ENCODE measurements at regions of chr9 and their contacts with region 1.

Region 1: DNA sequence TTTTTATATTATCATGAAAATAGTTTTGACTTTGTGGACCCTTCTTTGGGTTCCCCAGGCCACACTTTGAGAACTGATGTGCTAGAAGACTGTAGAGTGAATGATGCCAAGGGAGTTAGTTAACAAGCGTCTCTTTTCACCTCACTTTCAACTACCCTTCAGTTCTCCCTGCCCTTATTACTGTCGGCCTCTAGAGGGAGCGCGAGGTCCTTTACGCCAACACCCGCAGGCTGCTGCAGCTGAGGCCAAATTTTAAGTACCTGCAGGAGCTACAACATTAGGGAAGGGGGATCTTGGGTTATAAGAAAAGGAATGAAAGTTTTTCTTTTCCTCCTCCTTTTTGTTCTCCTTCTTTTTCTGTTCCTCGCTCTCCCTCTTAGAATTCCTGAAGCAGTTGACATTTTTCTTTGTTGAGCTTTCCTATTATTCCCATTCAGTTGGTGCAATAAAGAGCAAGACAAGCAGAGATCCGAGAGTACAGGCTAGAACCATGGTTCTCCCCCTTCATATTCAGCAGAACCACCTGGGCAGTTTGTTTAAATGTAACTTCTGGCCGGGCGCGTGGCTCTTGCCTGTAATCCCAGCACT is 84.0 kb downstream of the ZFAND5 start:
- DNase-seq: peak; percentile 81
- ATAC-seq: peak; percentile 77
- H3K4me3 Mint-ChIP-seq: no peak overlapping the region
- H3K27ac Mint-ChIP-seq: no peak overlapping the region
- H3K4me1 Mint-ChIP-seq: no peaks in the 10 kb centered on the region
- H3K27me3 Mint-ChIP-seq: no peaks in the 10 kb centered on the region
- CTCF ChIP-seq: peak; percentile 91

Region 2: GRCh38 chr9:72038890-72039410 is 242.1 kb before region 1 on chr9:
- CTCF ChIA-PET with region 1: interaction called, 35 read pairs
- POLR2A ChIA-PET with region 1: no interaction called
- intact Hi-C with region 1: no loop called
- DNase-seq: peak; percentile 75
- ATAC-seq: peak; percentile 92
- H3K4me3 Mint-ChIP-seq: no peak overlapping the region
- H3K27ac Mint-ChIP-seq: no peak overlapping the region
- H3K4me1 Mint-ChIP-seq: no peaks in the 10 kb centered on the region
- H3K27me3 Mint-ChIP-seq: peaks cover 5% of the 10 kb centered on the region
- CTCF ChIP-seq: peak; percentile 91

Region 3: DNA sequence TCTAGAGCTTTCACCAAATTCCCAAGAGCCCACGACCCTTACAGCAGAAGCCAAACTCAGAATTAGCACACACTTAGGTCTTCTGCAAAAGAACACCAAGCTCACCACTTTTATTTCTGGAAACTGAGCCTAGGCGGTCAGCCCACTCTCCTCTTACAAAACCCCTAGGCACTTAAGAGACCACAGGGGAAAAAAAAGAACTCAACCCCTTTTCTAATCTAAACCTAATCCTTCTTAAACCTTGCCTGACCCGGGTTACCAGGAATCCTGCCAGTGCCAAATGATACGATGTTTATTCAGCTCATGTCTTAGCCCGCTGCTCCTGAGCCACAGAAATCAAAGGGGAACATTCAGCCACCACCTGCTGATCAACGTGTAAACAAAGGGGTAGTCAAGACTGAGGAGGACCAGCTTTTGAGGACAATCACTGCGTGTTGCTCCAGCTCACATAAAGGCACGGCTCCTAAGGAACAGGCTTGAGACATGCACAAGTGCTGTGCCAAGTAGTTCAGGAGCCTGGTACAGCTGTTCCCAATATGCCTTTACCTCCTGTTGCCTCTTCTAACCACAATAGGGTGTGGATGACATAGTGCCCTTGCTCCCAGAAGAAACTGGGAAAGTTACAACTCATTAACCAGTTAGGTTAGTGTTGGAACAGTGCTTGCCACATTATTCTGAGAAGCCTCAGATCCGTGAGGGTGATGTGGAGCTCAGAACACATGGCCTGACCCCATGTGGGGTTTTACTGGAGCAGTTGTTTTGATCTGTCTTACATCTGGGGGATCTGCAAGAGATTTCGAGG is 34.7 kb after region 1 on chr9:
- CTCF ChIA-PET with region 1: interaction called, 11 read pairs
- POLR2A ChIA-PET with region 1: no interaction called
- intact Hi-C with region 1: no loop called
- DNase-seq: no peak
- ATAC-seq: no peak
- H3K4me3 Mint-ChIP-seq: no peak overlapping the region
- H3K27ac Mint-ChIP-seq: no peak overlapping the region
- H3K4me1 Mint-ChIP-seq: no peaks in the 10 kb centered on the region
- H3K27me3 Mint-ChIP-seq: peaks cover 2% of the 10 kb centered on the region
- CTCF ChIP-seq: no peak

Region 4: GRCh38 chr9:72592502-72593403 is 311.7 kb after region 1 on chr9:
- CTCF ChIA-PET with region 1: interaction called, 73 read pairs
- POLR2A ChIA-PET with region 1: no interaction called
- intact Hi-C with region 1: loop called (anchors 2 kb)
- DNase-seq: peak; percentile 40
- ATAC-seq: peak; percentile 62
- H3K4me3 Mint-ChIP-seq: no peak overlapping the region
- H3K27ac Mint-ChIP-seq: peak overlapping the region; percentile 44
- H3K4me1 Mint-ChIP-seq: peaks cover 30% of the 10 kb centered on the region
- H3K27me3 Mint-ChIP-seq: no peaks in the 10 kb centered on the region
- CTCF ChIP-seq: peak; percentile 92

Region 5: DNA sequence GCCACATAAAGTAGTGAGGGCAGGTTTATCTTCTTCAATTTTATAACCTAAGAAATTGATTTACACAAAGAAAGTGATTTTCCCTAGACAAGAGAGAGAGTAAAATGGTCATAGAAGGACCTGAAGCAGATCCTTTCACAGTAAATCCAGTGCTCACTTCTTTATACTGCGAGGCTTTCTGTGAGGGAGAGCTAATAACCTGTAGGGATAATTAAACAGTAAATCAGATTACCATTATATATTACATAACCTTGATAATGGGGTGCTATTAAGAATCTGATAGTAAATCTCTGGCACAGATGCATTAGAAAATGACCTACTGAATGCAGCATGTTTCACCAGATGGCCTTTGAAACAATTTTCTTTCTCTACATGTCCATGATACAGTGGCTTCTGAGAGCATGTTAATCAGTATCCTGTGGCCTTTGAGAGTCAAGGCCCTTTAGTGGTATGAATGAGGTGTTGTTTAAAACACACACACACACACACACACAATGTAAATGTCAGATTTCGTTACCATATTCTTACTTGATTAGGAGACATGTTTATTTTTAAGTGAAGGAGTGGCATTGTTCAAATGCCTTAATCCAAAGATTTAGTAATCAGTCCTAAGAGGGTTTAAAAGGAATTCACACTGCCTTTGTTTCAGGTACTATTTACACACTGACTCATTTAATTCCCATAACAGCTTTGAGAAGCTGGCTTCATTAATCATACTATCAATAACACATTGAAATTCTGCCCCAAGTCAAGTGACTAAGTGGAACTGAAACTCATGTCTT is 547.1 kb after region 1 on chr9:
- CTCF ChIA-PET with region 1: interaction called, 33 read pairs
- POLR2A ChIA-PET with region 1: no interaction called
- intact Hi-C with region 1: loop called (anchors 10 kb)
- DNase-seq: no peak
- ATAC-seq: no peak
- H3K4me3 Mint-ChIP-seq: no peak overlapping the region
- H3K27ac Mint-ChIP-seq: no peak overlapping the region
- H3K4me1 Mint-ChIP-seq: no peaks in the 10 kb centered on the region
- H3K27me3 Mint-ChIP-seq: peaks cover 2% of the 10 kb centered on the region
- CTCF ChIP-seq: no peak